Activated naive CD8-positive, alpha-beta T cell treated with anti-CD3 and anti-CD28 coated beads, Interleukin-2, amount 10 ng/mL, durations not matched to agents 7 days and 5 days (primary cell): ENCODE measurements at regions of chr1 and their contacts with region 1.

Region 1: GRCh38 chr1:941588-942383 is 17.3 kb downstream of the NOC2L start:
- DNase-seq: peak; percentile 70
- ATAC-seq: peak; percentile 18
- H3K4me3 Mint-ChIP-seq: peak overlapping the region; percentile 68
- H3K27ac Mint-ChIP-seq: no peak overlapping the region
- H3K4me1 Mint-ChIP-seq: peaks cover 4% of the 10 kb centered on the region
- H3K27me3 Mint-ChIP-seq: peaks cover 27% of the 10 kb centered on the region

Region 2: GRCh38 chr1:966611-967300 is 25.0 kb after region 1 on chr1:
- POLR2A ChIA-PET with region 1: interaction called, 11 read pairs
- DNase-seq: peak; percentile 82
- ATAC-seq: peak; percentile 85
- H3K4me3 Mint-ChIP-seq: peak overlapping the region; percentile 82
- H3K27ac Mint-ChIP-seq: peak overlapping the region; percentile 87
- H3K4me1 Mint-ChIP-seq: peaks cover 5% of the 10 kb centered on the region
- H3K27me3 Mint-ChIP-seq: peaks cover 4% of the 10 kb centered on the region